ENCODE measurements at regions of chr6 and their contacts with region 1.

Region 1: DNA sequence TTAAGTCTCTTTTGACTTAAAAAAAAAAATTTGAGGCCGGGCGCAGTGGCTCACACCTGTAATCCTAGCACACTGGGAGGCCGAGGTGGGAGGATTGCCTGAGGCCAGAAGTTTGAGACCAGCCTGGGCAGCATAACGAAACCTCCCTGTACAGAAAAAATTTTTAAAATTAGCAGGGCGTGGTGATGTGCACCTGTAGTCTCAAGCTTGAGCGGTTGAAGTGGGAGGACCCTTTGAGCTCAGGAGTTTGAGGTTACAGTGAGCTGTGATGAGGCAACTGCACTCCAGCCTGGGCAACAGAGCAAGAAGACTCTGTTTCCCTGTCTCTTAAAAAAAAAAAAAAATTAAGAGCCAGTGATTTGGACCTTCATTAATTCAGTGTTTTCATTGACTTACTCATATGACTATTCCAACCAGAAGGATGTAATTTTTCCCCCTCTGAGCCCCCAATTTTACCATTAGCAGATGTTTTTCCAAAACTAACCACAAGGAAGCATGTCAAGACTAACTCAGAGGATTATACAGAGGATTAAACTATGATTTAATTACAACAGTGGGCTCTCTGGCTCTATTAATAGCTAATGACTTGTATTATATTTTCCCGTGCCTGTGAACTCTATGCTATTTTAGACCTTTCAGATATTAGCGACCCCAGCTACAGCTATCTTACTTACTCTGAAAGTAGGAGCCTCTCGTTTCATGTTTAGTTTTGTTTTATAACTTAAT is 75.1 kb downstream of the ARID1B start:
- DNase-seq: peak; percentile 70
- ATAC-seq: peak; percentile 75
- H3K4me3 ChIP-seq: peak overlapping the region in 1 of 5 experiments; percentile 35
- H3K4me3 Mint-ChIP-seq: peak overlapping the region; percentile 30
- H3K27ac ChIP-seq: peak overlapping the region in 1 of 2 donors; percentile 62
- H3K27ac Mint-ChIP-seq: peak overlapping the region; percentile 23
- H3K4me1 ChIP-seq: peaks cover 80 to 85% of the 10 kb centered on the region in 2 donors
- H3K4me1 Mint-ChIP-seq: peaks cover 95% of the 10 kb centered on the region
- H3K27me3 ChIP-seq: no peaks in the 10 kb centered on the region
- H3K27me3 Mint-ChIP-seq: no peaks in the 10 kb centered on the region
- CTCF ChIP-seq: no peak

Region 2: DNA sequence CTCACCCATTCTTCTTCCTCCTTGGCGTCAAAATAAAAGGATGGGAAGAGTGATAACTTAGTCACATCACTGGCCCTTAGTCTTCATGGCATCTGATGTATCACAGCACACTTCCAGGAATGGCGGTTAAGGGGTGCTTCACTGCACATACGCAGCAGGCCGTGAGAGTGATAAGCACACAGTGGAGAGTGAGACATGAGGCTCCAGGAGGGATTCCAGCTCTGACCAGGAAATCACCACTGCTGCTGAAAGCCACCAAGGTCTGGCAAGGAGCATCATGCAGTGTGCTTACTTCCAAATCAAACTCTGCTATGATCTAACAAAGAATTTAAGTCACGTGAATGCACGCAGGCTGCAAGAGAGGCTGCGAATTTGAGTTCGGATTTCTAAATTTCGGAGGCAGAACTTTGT is 12.7 kb before region 1 on chr6:
- CTCF ChIA-PET with region 1: interaction called, 3 read pairs
- POLR2A ChIA-PET with region 1: interaction called, 5 read pairs
- intact Hi-C with region 1: loop called (anchors 1 kb)
- DNase-seq: no peak
- ATAC-seq: no peak
- H3K4me3 ChIP-seq: no peak overlapping the region
- H3K4me3 Mint-ChIP-seq: no peak overlapping the region
- H3K27ac ChIP-seq: peak overlapping the region in 1 of 2 donors; percentile 14
- H3K27ac Mint-ChIP-seq: peak overlapping the region; percentile 70
- H3K4me1 ChIP-seq: peaks cover 32 to 36% of the 10 kb centered on the region in 2 donors
- H3K4me1 Mint-ChIP-seq: peaks cover 55% of the 10 kb centered on the region
- H3K27me3 ChIP-seq: no peaks in the 10 kb centered on the region
- H3K27me3 Mint-ChIP-seq: no peaks in the 10 kb centered on the region
- CTCF ChIP-seq: no peak